ENCODE measurements at regions of chr7 and their contacts with region 1.

Region 1: GRCh38 chr7:139075031-139075652 is 34.4 kb downstream of the ZC3HAV1 start:
- DNase-seq: peak; percentile 77
- ATAC-seq: peak; percentile 96
- H3K4me3 ChIP-seq: no peak overlapping the region
- H3K27ac ChIP-seq: no peak overlapping the region
- H3K4me1 ChIP-seq: no peaks in the 10 kb centered on the region
- H3K27me3 ChIP-seq: no peaks in the 10 kb centered on the region
- CTCF ChIP-seq: peak; percentile 88
- POLR2A ChIP-seq: no peak
- RAD21 ChIP-seq: peak; percentile 78

Region 2: DNA sequence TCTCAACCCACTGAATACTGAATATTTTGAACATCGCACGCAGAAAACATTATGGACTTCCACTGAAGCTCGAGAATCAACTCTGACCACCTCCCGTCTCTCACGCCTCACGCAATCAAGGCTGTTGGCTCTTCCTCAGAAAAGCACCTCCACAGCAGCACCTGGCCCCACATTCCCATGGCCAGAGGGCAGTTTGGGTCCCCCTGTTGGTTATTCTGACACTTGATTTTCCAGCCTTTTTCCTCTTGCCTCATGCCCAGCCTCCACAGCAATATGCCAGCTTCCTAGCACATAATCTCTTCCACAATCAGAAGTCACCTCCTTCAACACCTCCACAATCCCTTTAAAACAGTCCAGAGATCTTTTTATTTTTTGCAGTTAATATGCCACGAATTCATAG is 429.9 kb before region 1 on chr7:
- CTCF ChIA-PET with region 1: no interaction called
- POLR2A ChIA-PET with region 1: no interaction called
- dilution Hi-C with region 1: no loop called
- in situ Hi-C with region 1: no loop called
- intact Hi-C with region 1: no loop called
- DNase-seq: no peak
- ATAC-seq: no peak
- H3K4me3 ChIP-seq: no peak overlapping the region
- H3K27ac ChIP-seq: no peak overlapping the region
- H3K4me1 ChIP-seq: no peaks in the 10 kb centered on the region
- H3K27me3 ChIP-seq: no peaks in the 10 kb centered on the region
- CTCF ChIP-seq: no peak
- POLR2A ChIP-seq: no peak
- RAD21 ChIP-seq: no peak

Region 3: GRCh38 chr7:138886501-138886917 is 188.6 kb before region 1 on chr7:
- CTCF ChIA-PET with region 1: interaction called, 3 read pairs
- POLR2A ChIA-PET with region 1: no interaction called
- dilution Hi-C with region 1: no loop called
- in situ Hi-C with region 1: loop called (anchors 10 kb)
- intact Hi-C with region 1: loop called (anchors 1 kb)
- DNase-seq: peak; percentile 73
- ATAC-seq: peak; percentile 79
- H3K4me3 ChIP-seq: no peak overlapping the region
- H3K27ac ChIP-seq: no peak overlapping the region
- H3K4me1 ChIP-seq: peaks cover 6% of the 10 kb centered on the region; the same call in 1 of the 2 replicates
- H3K27me3 ChIP-seq: no peaks in the 10 kb centered on the region
- CTCF ChIP-seq: peak; percentile 77
- POLR2A ChIP-seq: no peak
- RAD21 ChIP-seq: peak; percentile 66

Region 4: DNA sequence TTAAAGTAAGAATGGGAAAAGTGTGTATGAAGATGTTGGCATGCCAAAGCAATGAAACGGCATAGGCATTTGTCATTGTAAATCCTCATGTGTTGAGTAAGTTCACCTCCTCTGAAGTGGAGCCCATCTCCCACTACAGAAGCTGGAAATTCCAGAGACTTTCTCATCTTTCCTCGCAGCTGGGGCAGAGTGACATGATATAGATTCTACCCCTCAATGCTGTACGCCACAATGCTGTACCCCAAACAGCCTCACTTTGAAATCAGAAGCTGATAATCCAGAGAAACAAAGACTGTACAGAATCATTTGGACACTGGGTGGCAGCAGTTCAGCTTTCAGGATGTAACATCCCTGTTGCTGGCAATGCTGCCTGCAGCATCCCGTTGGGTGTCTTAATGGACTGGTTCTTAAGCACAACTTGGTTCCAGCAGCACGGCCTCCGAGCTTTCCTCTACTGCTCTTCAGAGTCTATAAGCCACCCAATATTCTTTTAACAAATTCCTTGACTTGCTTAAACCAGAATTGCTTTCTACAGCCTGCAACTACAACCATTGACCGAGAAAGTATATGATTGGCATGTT is 58.1 kb before region 1 on chr7:
- CTCF ChIA-PET with region 1: interaction called, 6 read pairs
- POLR2A ChIA-PET with region 1: no interaction called
- dilution Hi-C with region 1: no loop called
- in situ Hi-C with region 1: no loop called
- intact Hi-C with region 1: loop called (anchors 1 kb)
- DNase-seq: peak; percentile 75
- ATAC-seq: peak; percentile 97
- H3K4me3 ChIP-seq: no peak overlapping the region
- H3K27ac ChIP-seq: no peak overlapping the region
- H3K4me1 ChIP-seq: no peaks in the 10 kb centered on the region
- H3K27me3 ChIP-seq: peaks cover 5% of the 10 kb centered on the region; the same call in 1 of the 2 replicates
- CTCF ChIP-seq: peak; percentile 63
- POLR2A ChIP-seq: no peak
- RAD21 ChIP-seq: peak; percentile 53

Region 5: GRCh38 chr7:139133335-139134139 is 58.4 kb after region 1 on chr7:
- CTCF ChIA-PET with region 1: interaction called, 5 read pairs
- POLR2A ChIA-PET with region 1: no interaction called
- dilution Hi-C with region 1: no loop called
- in situ Hi-C with region 1: no loop called
- intact Hi-C with region 1: loop called (anchors 2 kb)
- DNase-seq: peak; percentile 86
- ATAC-seq: peak; percentile 100
- H3K4me3 ChIP-seq: peak overlapping the region; percentile 58
- H3K27ac ChIP-seq: peak overlapping the region; percentile 14
- H3K4me1 ChIP-seq: no peaks in the 10 kb centered on the region
- H3K27me3 ChIP-seq: no peaks in the 10 kb centered on the region
- CTCF ChIP-seq: no peak
- POLR2A ChIP-seq: no peak
- RAD21 ChIP-seq: peak; percentile 23

Region 6: GRCh38 chr7:139159900-139160675 is 84.9 kb after region 1 on chr7:
- CTCF ChIA-PET with region 1: no interaction called
- POLR2A ChIA-PET with region 1: no interaction called
- dilution Hi-C with region 1: no loop called
- in situ Hi-C with region 1: no loop called
- intact Hi-C with region 1: no loop called
- DNase-seq: peak; percentile 2
- ATAC-seq: no peak
- H3K4me3 ChIP-seq: no peak overlapping the region
- H3K27ac ChIP-seq: no peak overlapping the region
- H3K4me1 ChIP-seq: no peaks in the 10 kb centered on the region
- H3K27me3 ChIP-seq: no peaks in the 10 kb centered on the region
- CTCF ChIP-seq: no peak
- POLR2A ChIP-seq: no peak
- RAD21 ChIP-seq: no peak

Region 7: GRCh38 chr7:139192014-139192706 is 117.0 kb after region 1 on chr7:
- CTCF ChIA-PET with region 1: no interaction called
- POLR2A ChIA-PET with region 1: no interaction called
- dilution Hi-C with region 1: no loop called
- in situ Hi-C with region 1: no loop called
- intact Hi-C with region 1: no loop called
- DNase-seq: peak; percentile 25
- ATAC-seq: peak; percentile 63
- H3K4me3 ChIP-seq: no peak overlapping the region
- H3K27ac ChIP-seq: no peak overlapping the region
- H3K4me1 ChIP-seq: no peaks in the 10 kb centered on the region
- H3K27me3 ChIP-seq: no peaks in the 10 kb centered on the region
- CTCF ChIP-seq: no peak
- POLR2A ChIP-seq: no peak
- RAD21 ChIP-seq: no peak

Measured in IMR-90 (cell line).